ENCODE measurements at regions of chr20 and their contacts with region 1.

Region 1: GRCh38 chr20:62926239-62927104 is at the start of gene DIDO1:
- DNase-seq: peak; percentile 88
- H3K4me3 Mint-ChIP-seq: peak within 1 kb of the TSS; percentile 91
- H3K27ac Mint-ChIP-seq: peak within 1 kb of the TSS; percentile 91
- H3K4me1 Mint-ChIP-seq: peaks cover 70% of the 10 kb centered on the region
- H3K27me3 Mint-ChIP-seq: no peaks in the 10 kb centered on the region
- total RNA-seq, gene DIDO1: 60.5 and 60.8 TPM in 2 replicates

Region 2: DNA sequence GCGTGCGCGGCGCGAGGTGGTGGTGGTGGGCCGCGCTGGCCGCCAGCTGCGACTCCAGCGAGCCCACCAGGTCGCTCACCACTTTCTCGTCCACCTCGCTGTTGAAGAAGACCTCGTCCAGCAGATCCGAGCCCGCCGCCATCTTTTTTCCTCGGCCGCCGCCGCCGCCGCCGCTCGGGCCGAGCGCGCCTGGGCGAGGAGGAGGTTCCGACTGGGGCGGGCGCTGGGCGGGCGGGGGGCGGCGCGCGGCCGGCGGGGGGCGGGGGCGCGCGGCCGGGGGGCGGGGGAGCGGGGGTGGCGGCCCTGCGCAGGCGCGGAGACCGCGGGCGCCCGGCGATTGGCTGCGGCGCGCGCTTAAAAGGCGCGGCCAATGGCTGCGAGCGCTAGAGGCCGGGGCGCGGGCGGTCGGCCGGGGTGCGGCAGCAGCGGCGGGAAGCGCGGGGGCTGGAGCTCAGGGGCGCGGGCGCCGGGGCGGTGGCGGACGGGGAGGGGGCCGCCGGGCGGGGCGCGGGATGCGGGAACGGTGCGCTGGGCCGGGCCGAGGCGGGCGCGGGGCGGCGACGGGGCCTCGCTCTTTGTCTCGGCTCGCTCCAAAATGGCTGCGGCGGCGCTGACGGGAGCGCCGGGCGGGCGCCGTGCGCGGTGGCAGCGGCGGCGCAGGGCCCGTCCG is 860.7 kb before region 1 on chr20 and contains the start of gene TAF4:
- intact Hi-C with region 1: loop called (anchors 10 kb)
- DNase-seq: peak; percentile 80
- H3K4me3 Mint-ChIP-seq: peak within 1 kb of the TSS; percentile 84
- H3K27ac Mint-ChIP-seq: peak within 1 kb of the TSS; percentile 84
- H3K4me1 Mint-ChIP-seq: peaks cover 42% of the 10 kb centered on the region
- H3K27me3 Mint-ChIP-seq: peaks cover 6% of the 10 kb centered on the region
- total RNA-seq, gene TAF4: 26.3 and 28.3 TPM in 2 replicates

Region 3: DNA sequence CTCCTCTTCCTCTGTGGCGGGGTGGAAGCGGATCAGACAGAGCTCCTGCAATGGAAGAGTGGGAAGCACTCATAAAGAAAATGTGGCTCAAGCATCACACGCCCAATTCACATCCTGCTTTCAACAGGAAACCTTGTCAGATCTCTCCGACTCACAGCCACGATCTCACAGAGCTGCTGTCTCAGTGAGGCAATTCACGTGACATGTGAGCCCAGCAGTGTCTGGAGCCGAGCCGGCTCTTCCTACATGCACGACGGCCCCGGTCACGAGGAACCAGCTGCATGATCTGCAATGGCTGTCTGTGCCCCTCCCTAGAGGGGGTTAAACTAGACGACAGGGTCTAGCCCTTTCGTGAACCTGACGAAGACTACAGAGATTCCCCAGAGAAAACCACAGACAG is 35.4 kb before region 1 on chr20:
- intact Hi-C with region 1: loop called (anchors 5 kb)
- DNase-seq: no peak
- H3K4me3 Mint-ChIP-seq: no peak overlapping the region
- H3K27ac Mint-ChIP-seq: peak overlapping the region; percentile 36
- H3K4me1 Mint-ChIP-seq: peaks cover 27% of the 10 kb centered on the region
- H3K27me3 Mint-ChIP-seq: no peaks in the 10 kb centered on the region

Region 4: DNA sequence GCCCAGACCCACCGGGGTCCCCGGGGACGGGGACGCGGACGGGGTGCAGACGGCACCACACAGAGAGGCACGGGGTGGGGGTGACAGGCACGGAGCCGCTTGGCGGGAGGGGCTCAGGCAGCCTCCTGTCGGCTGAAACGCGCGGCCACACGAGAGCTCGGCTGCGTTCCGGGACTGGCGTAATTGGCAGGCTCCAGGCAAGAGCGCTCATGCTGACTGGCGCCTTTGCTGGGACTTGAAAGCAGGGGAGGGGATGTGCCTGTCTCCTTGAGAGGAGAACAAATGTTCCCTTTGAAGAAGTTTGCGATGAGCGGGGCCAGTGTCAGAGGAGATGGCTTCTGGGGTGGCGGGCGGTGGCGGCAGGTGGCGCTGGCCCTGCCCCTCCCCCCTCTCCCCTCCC is 54.5 kb after region 1 on chr20:
- intact Hi-C with region 1: loop called (anchors 2 kb)
- DNase-seq: no peak
- H3K4me3 Mint-ChIP-seq: no peak overlapping the region
- H3K27ac Mint-ChIP-seq: no peak overlapping the region
- H3K4me1 Mint-ChIP-seq: peaks cover 19% of the 10 kb centered on the region
- H3K27me3 Mint-ChIP-seq: peaks cover 51% of the 10 kb centered on the region